GM12878 (cell line): ENCODE measurements at regions of chr18 and their contacts with region 1.

Region 1: GRCh38 chr18:63016270-63016669 is 300.9 kb downstream of the PHLPP1 start:
- DNase-seq: peak; percentile 21
- ATAC-seq: peak; percentile 92
- H3K4me3 ChIP-seq: no peak overlapping the region
- H3K27ac ChIP-seq: no peak overlapping the region
- H3K4me1 ChIP-seq: no peaks in the 10 kb centered on the region
- H3K27me3 ChIP-seq: no peaks in the 10 kb centered on the region
- CTCF ChIP-seq: peak; percentile 72 to 88 (median 72)
- EP300 ChIP-seq: no peak
- POLR2A ChIP-seq: no peak
- RAD21 ChIP-seq: peak; percentile 99

Region 2: DNA sequence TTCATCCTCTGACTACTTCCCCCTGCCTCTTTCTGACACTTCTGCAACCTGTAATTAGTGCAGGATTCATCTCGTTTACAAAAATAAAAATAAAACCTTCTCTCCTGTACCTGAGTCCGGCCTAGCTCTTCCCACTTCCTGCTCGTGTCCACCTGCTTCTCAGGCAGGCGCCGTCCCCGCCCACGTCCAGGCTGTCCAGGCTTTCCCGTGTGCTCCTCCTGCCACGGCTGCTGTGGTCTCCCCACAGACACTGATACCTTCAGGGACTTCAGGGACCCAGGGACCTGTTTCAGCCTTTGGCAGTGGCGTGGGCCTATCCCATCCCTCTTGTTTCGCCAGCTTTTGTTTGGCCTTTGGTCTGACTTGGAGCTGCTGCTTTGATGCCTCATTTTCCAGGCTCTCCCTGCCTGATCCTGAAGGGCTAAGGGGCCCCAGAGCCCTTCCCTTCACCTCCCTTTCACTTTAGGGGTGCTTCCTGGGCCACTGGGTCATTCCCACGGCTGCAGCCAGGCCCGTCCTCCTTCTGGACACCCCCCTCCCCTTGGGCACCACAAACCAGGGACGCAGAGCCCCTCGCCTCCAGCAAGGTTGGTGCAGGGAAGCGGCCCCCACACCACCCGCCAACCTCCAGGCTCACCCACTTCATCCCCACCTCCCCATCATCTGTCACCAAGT is 28.3 kb before region 1 on chr18:
- CTCF ChIA-PET with region 1: no interaction called
- POLR2A ChIA-PET with region 1: no interaction called
- RAD21 ChIA-PET with region 1: no interaction called
- SMC1A ChIA-PET with region 1: no interaction called
- in situ Hi-C with region 1: no loop called
- intact Hi-C with region 1: no loop called
- DNase-seq: no peak
- ATAC-seq: no peak
- H3K4me3 ChIP-seq: no peak overlapping the region
- H3K27ac ChIP-seq: no peak overlapping the region
- H3K4me1 ChIP-seq: no peaks in the 10 kb centered on the region
- H3K27me3 ChIP-seq: no peaks in the 10 kb centered on the region
- CTCF ChIP-seq: no peak
- EP300 ChIP-seq: no peak
- POLR2A ChIP-seq: no peak
- RAD21 ChIP-seq: no peak

Region 3: DNA sequence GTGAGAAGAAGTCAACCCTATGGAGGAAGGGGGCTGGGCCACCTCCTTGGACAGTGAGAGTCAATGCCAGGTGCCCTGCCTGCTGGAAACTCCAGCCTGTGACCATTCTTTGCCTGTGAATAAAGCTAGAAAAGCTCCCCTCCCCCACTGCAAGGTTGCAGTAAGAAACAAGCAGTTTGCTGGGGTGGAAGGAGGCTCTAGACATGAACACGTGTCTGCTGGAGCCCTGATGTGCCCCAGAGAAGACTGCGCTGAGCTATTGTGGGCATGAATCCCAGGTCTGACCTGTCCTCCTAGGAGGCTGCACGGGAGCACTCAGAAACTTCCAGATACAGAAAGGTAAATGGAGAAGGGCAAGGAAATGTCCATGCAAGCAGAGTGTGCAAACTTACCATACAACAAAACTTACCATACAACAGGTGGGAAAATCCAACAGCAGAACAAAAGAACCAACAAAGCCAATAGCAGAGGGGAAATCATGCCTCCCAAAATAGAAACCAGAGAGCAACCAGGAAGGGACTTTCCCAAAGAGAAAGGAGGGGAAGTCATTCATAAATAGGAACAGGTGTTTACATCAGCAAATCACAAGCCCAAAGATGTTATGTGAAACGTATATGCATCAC is 24.6 kb after region 1 on chr18:
- CTCF ChIA-PET with region 1: interaction called, 19 read pairs
- POLR2A ChIA-PET with region 1: no interaction called
- RAD21 ChIA-PET with region 1: interaction called, 11 read pairs
- SMC1A ChIA-PET with region 1: interaction called, 25 read pairs
- in situ Hi-C with region 1: no loop called
- intact Hi-C with region 1: no loop called
- DNase-seq: peak; percentile 83
- ATAC-seq: peak; percentile 83
- H3K4me3 ChIP-seq: peak overlapping the region; percentile 19; the same call in 1 of the 2 replicates
- H3K27ac ChIP-seq: peak overlapping the region; percentile 84
- H3K4me1 ChIP-seq: peaks cover 36% of the 10 kb centered on the region
- H3K27me3 ChIP-seq: no peaks in the 10 kb centered on the region
- CTCF ChIP-seq: no peak
- EP300 ChIP-seq: peak; percentile 73 to 87
- POLR2A ChIP-seq: peak; percentile 22; the same call in 1 of the 2 replicates
- RAD21 ChIP-seq: no peak

Region 4: DNA sequence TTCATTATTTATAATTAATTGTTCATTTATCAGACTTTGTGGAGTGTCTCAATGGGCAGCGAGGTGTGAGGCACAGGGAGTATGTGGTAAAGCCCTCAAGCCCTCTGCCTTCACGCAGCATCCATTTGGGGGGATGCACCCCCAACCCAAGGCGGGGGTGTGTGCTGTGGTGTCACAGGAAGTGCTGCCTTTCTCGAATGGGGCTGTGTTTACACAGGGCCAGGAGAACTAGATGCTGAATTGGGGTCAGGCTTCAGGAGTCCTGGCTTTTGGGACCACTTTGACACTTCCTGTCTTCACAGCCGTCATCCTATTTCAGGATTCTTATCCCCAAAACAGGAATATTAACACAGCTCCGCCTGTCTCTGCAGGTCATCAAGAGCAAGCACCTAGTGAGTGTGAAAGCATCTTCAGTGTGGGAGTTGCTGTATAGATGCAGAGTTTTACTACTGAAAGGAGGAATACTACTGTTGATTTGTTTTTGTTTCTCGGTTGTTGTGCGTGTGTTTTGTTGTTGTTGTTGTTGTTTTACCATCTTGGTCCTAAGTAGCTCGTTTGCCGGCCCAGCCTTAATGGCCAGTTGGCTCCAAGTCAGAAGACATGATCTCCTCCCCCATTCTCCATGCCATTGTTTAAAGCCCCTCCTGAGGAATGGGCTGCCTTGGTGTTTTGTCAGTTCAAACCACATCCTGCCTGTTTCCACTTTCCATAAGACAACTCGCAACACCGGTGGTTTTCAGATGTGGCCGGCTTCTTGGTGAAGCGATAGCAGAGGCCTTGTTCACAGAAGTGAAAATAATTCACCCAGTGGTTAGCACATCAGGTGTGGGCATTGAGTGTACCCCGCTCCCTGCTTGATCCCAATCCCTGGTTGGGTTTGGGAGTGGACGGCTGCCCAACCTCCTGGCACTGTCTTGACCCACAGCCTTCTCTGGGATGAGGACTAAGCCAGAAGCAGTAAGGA is 82.0 kb after region 1 on chr18:
- CTCF ChIA-PET with region 1: interaction called, 16 read pairs
- POLR2A ChIA-PET with region 1: interaction called, 6 read pairs
- RAD21 ChIA-PET with region 1: interaction called, 10 read pairs
- SMC1A ChIA-PET with region 1: interaction called, 11 read pairs
- in situ Hi-C with region 1: no loop called
- intact Hi-C with region 1: no loop called
- DNase-seq: peak; percentile 77
- ATAC-seq: peak; percentile 79
- H3K4me3 ChIP-seq: peak overlapping the region; percentile 8; the same call in 1 of the 2 replicates
- H3K27ac ChIP-seq: peak overlapping the region; percentile 86
- H3K4me1 ChIP-seq: peaks cover 34% of the 10 kb centered on the region
- H3K27me3 ChIP-seq: no peaks in the 10 kb centered on the region
- CTCF ChIP-seq: no peak
- EP300 ChIP-seq: peak; percentile 65 to 83; a peak in 3 of 4 replicates
- POLR2A ChIP-seq: no peak
- RAD21 ChIP-seq: no peak

Region 5: GRCh38 chr18:63131106-63131958 is 115.1 kb after region 1 on chr18:
- CTCF ChIA-PET with region 1: interaction called, 33 read pairs
- POLR2A ChIA-PET with region 1: no interaction called
- RAD21 ChIA-PET with region 1: interaction called, 17 read pairs
- SMC1A ChIA-PET with region 1: interaction called, 15 read pairs
- in situ Hi-C with region 1: no loop called
- intact Hi-C with region 1: loop called (anchors 2 kb)
- DNase-seq: no peak
- ATAC-seq: peak; percentile 84
- H3K4me3 ChIP-seq: no peak overlapping the region
- H3K27ac ChIP-seq: peak overlapping the region; percentile 49
- H3K4me1 ChIP-seq: peaks cover 24% of the 10 kb centered on the region
- H3K27me3 ChIP-seq: no peaks in the 10 kb centered on the region
- CTCF ChIP-seq: peak; percentile 52 to 65 (median 59)
- EP300 ChIP-seq: no peak
- POLR2A ChIP-seq: no peak
- RAD21 ChIP-seq: peak; percentile 76

Region 6: DNA sequence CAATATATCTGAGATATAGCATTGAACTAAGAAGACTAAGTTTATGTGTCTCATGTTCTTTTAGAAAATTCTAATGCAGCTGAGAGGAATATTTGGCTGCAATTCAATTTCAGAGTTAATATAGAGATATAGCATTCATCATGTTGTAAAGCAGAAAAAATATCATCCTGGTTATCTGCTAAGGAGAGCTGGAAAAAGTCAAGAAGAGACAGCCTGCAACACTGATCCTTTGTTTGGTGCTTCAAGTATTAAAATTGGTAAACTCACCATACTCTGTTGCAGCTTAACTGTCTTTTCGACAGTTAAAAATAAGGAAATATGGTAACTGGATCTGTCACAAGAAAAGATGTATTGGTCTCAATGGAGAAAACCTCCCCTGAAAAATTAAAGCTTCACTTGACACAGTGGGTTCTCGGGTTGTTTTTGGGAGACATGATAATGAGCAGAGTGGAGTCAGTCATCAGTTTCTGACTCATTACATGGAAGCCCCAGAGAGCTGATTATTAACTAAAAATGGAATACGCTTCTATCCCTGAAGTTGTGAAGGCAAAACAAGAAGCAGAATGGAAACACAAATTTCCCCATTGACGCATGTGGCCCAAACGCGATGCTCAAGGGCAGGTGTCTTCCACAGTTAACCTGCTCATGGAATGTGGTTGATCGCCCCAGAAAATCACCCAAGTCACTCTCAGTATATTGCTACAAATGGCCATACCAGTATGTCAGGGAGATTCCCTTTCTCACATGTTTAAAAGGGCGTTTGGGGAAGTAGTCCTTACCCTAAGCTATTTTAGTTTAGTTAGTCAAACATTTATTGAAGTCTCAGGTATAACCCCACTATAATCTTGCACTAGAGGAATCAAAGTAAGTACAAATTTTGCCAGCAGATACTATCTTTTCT is 295.1 kb after region 1 on chr18:
- CTCF ChIA-PET with region 1: interaction called, 10 read pairs
- POLR2A ChIA-PET with region 1: interaction called, 3 read pairs
- RAD21 ChIA-PET with region 1: interaction called, 3 read pairs
- SMC1A ChIA-PET with region 1: interaction called, 7 read pairs
- in situ Hi-C with region 1: no loop called
- intact Hi-C with region 1: no loop called
- DNase-seq: peak; percentile 88
- ATAC-seq: peak; percentile 65
- H3K4me3 ChIP-seq: peak overlapping the region; percentile 98
- H3K27ac ChIP-seq: peak overlapping the region; percentile 90
- H3K4me1 ChIP-seq: peaks cover 34% of the 10 kb centered on the region
- H3K27me3 ChIP-seq: no peaks in the 10 kb centered on the region
- CTCF ChIP-seq: no peak
- EP300 ChIP-seq: peak; percentile 93 to 96; a peak in 3 of 4 replicates
- POLR2A ChIP-seq: no peak; the same call in 1 of the 2 replicates
- RAD21 ChIP-seq: no peak

Region 7: GRCh38 chr18:63433334-63433866 is 417.1 kb after region 1 on chr18:
- CTCF ChIA-PET with region 1: interaction called, 140 read pairs
- POLR2A ChIA-PET with region 1: no interaction called
- RAD21 ChIA-PET with region 1: interaction called, 39 read pairs
- SMC1A ChIA-PET with region 1: interaction called, 69 read pairs
- in situ Hi-C with region 1: no loop called
- intact Hi-C with region 1: no loop called
- DNase-seq: no peak
- ATAC-seq: no peak
- H3K4me3 ChIP-seq: no peak overlapping the region
- H3K27ac ChIP-seq: no peak overlapping the region
- H3K4me1 ChIP-seq: no peaks in the 10 kb centered on the region
- H3K27me3 ChIP-seq: peaks cover 0 to 5% of the 10 kb centered on the region in 2 experiments; a peak in 1 of 4 replicates
- CTCF ChIP-seq: no peak
- EP300 ChIP-seq: no peak
- POLR2A ChIP-seq: no peak
- RAD21 ChIP-seq: no peak